ENCODE measurements at regions of chr4 and their contacts with region 1.

Region 1: DNA sequence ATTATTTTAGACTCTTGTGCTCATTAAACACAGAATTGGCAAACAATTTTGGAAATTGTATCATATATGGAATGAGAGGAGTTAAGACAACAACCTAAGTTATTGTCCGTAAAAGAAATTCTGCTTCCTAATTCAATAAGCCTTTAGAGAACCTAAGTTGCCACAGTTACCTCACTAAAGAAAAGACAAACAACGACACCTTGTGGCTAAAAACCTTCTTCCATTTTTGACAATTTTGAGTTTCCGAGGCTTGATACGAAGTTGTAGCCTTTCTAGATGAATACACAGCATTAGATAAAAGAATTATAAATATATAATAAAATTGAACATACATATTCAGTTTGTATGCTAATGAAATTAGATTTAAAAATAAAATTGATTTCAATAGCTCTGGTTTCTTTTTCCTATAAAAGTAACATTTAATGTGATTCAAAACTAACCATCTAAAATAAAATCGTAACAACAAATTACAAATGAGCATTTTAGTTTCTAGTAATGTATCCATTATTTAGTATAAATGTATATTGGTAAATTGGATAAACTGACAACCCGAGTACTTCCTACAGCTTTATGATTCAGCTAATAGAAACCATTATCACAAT is 275.1 kb downstream of the GPM6A start:
- DNase-seq: peak; percentile 54
- H3K4me3 ChIP-seq: no peak overlapping the region
- H3K27ac ChIP-seq: no peak overlapping the region
- H3K4me1 ChIP-seq: no peaks in the 10 kb centered on the region
- H3K27me3 ChIP-seq: no peaks in the 10 kb centered on the region
- CTCF ChIP-seq: peak; percentile 46 to 63

Region 2: GRCh38 chr4:174873931-174874330 is 663.0 kb before region 1 on chr4:
- CTCF ChIA-PET with region 1: no interaction called
- dilution Hi-C with region 1: no loop called
- in situ Hi-C with region 1: no loop called
- intact Hi-C with region 1: loop called (anchors 5 kb)
- DNase-seq: no peak
- H3K4me3 ChIP-seq: no peak overlapping the region
- H3K27ac ChIP-seq: no peak overlapping the region
- H3K4me1 ChIP-seq: no peaks in the 10 kb centered on the region
- H3K27me3 ChIP-seq: no peaks in the 10 kb centered on the region
- CTCF ChIP-seq: peak; percentile 14 to 45

Region 3: DNA sequence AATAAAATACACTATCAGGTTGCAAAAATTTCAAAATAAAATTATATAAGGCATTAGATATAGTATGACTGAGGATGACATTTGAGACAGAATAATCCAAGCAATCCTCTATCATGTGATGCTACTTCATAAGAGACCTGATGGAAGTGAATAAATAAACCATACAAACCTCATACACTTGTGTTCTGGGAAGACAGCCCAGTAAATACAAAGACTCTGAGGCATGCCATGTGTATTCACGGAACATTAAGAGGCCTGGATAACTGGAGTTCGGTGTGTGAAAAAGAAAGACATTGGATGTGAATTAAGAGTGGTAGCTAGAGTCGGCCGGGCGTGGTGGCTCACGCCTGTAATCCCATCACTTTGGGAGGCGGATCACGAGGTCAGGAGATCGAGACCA is 254.5 kb before region 1 on chr4:
- CTCF ChIA-PET with region 1: no interaction called
- dilution Hi-C with region 1: no loop called
- in situ Hi-C with region 1: no loop called
- intact Hi-C with region 1: loop called (anchors 5 kb)
- DNase-seq: no peak
- H3K4me3 ChIP-seq: no peak overlapping the region
- H3K27ac ChIP-seq: no peak overlapping the region
- H3K4me1 ChIP-seq: no peaks in the 10 kb centered on the region
- H3K27me3 ChIP-seq: no peaks in the 10 kb centered on the region
- CTCF ChIP-seq: no peak

Measured in mammary epithelial cell (primary cell).